PC-9 (cell line): ENCODE measurements at regions of chr5 and their contacts with region 1.

Region 1: GRCh38 chr5:150469718-150470469 is 20.4 kb upstream of the RPS14 start:
- DNase-seq: peak; percentile 74 to 96
- H3K4me3 ChIP-seq: no peak overlapping the region
- H3K27ac ChIP-seq: peak overlapping the region; percentile 79
- H3K4me1 ChIP-seq: peaks cover 60% of the 10 kb centered on the region
- H3K27me3 ChIP-seq: no peaks in the 10 kb centered on the region
- CTCF ChIP-seq: no peak

Region 2: GRCh38 chr5:149913436-149914419 is 556.2 kb before region 1 on chr5:
- CTCF ChIA-PET with region 1: no interaction called
- POLR2A ChIA-PET with region 1: no interaction called
- intact Hi-C with region 1: loop called (anchors 5 kb)
- DNase-seq: no peak
- H3K4me3 ChIP-seq: no peak overlapping the region
- H3K27ac ChIP-seq: no peak overlapping the region
- H3K4me1 ChIP-seq: peaks cover 52% of the 10 kb centered on the region
- H3K27me3 ChIP-seq: no peaks in the 10 kb centered on the region
- CTCF ChIP-seq: no peak

Region 3: GRCh38 chr5:150458819-150459557 is 10.9 kb before region 1 on chr5:
- CTCF ChIA-PET with region 1: interaction called, 5 read pairs
- POLR2A ChIA-PET with region 1: interaction called, 6 read pairs
- intact Hi-C with region 1: loop called (anchors 1 kb)
- DNase-seq: peak in 1 of 2 experiments; percentile 90
- H3K4me3 ChIP-seq: no peak overlapping the region
- H3K27ac ChIP-seq: no peak overlapping the region
- H3K4me1 ChIP-seq: 0 out of 2 replicates have a peak, but pooled peaks cover 10% of the 10 kb centered on the region
- H3K27me3 ChIP-seq: no peaks in the 10 kb centered on the region
- CTCF ChIP-seq: peak; percentile 80

Region 4: GRCh38 chr5:150486402-150487198 is 16.7 kb after region 1 on chr5:
- CTCF ChIA-PET with region 1: interaction called, 11 read pairs
- POLR2A ChIA-PET with region 1: interaction called, 4 read pairs
- intact Hi-C with region 1: loop called (anchors 1 kb)
- DNase-seq: peak; percentile 70 to 91
- H3K4me3 ChIP-seq: peak overlapping the region; percentile 99
- H3K27ac ChIP-seq: peak overlapping the region; percentile 51
- H3K4me1 ChIP-seq: peaks cover 42% of the 10 kb centered on the region
- H3K27me3 ChIP-seq: no peaks in the 10 kb centered on the region
- CTCF ChIP-seq: no peak

Region 5: GRCh38 chr5:150517272-150518152 is 47.6 kb after region 1 on chr5:
- CTCF ChIA-PET with region 1: interaction called, 7 read pairs
- POLR2A ChIA-PET with region 1: interaction called, 17 read pairs
- intact Hi-C with region 1: loop called (anchors 1 kb)
- DNase-seq: peak; percentile 96 to 100
- H3K4me3 ChIP-seq: no peak overlapping the region
- H3K27ac ChIP-seq: peak overlapping the region; percentile 72
- H3K4me1 ChIP-seq: peaks cover 45% of the 10 kb centered on the region
- H3K27me3 ChIP-seq: no peaks in the 10 kb centered on the region
- CTCF ChIP-seq: no peak

Region 6: DNA sequence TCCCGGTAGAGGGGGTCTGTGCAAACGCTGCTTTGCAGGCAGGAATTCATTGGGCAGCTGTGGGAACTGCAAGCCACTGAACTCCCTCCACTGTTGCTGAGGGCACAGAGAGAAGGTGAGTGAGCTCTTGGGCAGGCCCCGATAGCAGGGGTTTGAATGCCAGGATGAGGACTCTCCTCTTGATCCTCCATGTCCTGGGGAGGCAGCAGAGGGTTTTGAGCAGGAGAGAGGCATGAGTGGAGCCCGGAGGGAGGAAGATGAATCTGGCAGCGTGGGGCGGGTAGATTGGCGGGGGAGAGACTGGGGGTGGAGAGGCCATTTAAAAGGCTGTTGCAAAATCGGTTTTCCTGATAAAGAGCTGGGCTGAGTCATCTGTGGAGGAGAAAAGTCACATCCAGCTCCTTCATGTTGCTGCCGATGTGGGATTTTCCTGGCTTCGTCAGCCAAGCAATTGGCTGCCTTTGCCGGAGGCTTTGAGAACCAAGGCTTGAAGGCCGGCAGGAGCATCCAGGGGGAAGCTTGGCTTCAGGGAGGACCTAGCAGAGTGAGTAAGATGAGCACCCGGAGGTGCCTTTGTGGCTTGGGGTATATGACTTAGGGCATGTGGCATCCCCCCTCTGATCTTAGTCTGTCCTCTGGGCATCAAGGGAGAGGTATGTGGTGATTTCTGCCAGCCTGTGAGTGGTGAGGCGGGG is 170.6 kb after region 1 on chr5 and contains the start of gene SYNPO:
- CTCF ChIA-PET with region 1: interaction called, 4 read pairs
- POLR2A ChIA-PET with region 1: no interaction called
- intact Hi-C with region 1: loop called (anchors 5 kb)
- DNase-seq: peak; percentile 70 to 87
- H3K4me3 ChIP-seq: peak within 1 kb of the TSS; percentile 42; the same call in 1 of the 2 replicates
- H3K27ac ChIP-seq: peak within 1 kb of the TSS; percentile 62
- H3K4me1 ChIP-seq: peaks cover 91% of the 10 kb centered on the region
- H3K27me3 ChIP-seq: no peaks in the 10 kb centered on the region
- CTCF ChIP-seq: no peak
- total RNA-seq, gene SYNPO: 1.8 and 2.0 TPM in 2 replicates

Region 7: GRCh38 chr5:151037561-151038411 is 567.9 kb after region 1 on chr5:
- CTCF ChIA-PET with region 1: no interaction called
- POLR2A ChIA-PET with region 1: no interaction called
- intact Hi-C with region 1: no loop called
- DNase-seq: no peak
- H3K4me3 ChIP-seq: no peak overlapping the region
- H3K27ac ChIP-seq: no peak overlapping the region
- H3K4me1 ChIP-seq: peaks cover 40% of the 10 kb centered on the region
- H3K27me3 ChIP-seq: no peaks in the 10 kb centered on the region
- CTCF ChIP-seq: no peak

Region 8: DNA sequence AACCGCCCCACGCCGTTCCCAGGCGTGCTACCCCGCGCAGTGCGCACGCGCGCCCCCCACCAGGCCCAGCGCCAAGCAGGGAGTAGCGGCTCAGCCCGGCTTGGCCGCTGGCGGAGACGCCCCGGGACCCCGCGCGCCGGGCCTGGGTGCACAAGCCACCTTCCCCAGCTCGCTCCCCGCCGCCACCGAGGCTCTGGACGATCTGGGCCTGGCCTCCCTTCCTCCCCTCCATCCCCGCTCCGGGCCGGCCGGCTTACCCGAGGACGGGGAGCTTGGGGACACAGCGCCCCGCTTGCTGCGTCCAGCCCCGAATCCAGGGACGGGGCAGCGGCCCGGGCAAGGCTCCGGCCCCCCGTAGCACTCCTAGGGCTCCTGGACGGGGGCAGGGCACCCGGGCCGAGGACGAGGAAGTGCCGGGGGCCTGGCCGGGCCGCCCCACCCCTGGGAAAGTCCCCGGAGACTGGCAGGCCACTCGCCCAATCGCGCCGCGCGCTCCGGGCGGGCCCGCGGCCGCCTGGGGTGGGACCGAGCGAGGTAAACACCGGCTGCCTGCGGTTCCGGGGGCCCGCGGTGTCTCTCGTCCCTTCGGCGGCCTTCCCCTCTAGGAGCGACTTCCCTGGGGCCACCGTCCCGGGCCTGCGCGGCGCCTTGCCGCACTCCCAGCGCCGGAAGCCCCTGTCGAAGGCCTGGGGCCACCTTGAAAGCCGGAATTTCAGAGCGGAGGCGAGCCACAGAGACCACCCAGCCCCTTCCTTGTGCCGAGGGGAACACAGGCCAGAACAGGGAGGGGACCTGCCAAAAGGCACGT is 610.9 kb after region 1 on chr5 and contains the start of gene TNIP1:
- CTCF ChIA-PET with region 1: no interaction called
- POLR2A ChIA-PET with region 1: no interaction called
- intact Hi-C with region 1: loop called (anchors 10 kb)
- DNase-seq: peak; percentile 78 to 98
- H3K4me3 ChIP-seq: peak within 1 kb of the TSS; percentile 75
- H3K27ac ChIP-seq: peak within 1 kb of the TSS; percentile 81
- H3K4me1 ChIP-seq: peaks cover 80% of the 10 kb centered on the region
- H3K27me3 ChIP-seq: no peaks in the 10 kb centered on the region
- CTCF ChIP-seq: no peak
- total RNA-seq, gene TNIP1: 122 and 124 TPM in 2 replicates